ENCODE measurements at regions of chr16 and their contacts with region 1.

Region 1: DNA sequence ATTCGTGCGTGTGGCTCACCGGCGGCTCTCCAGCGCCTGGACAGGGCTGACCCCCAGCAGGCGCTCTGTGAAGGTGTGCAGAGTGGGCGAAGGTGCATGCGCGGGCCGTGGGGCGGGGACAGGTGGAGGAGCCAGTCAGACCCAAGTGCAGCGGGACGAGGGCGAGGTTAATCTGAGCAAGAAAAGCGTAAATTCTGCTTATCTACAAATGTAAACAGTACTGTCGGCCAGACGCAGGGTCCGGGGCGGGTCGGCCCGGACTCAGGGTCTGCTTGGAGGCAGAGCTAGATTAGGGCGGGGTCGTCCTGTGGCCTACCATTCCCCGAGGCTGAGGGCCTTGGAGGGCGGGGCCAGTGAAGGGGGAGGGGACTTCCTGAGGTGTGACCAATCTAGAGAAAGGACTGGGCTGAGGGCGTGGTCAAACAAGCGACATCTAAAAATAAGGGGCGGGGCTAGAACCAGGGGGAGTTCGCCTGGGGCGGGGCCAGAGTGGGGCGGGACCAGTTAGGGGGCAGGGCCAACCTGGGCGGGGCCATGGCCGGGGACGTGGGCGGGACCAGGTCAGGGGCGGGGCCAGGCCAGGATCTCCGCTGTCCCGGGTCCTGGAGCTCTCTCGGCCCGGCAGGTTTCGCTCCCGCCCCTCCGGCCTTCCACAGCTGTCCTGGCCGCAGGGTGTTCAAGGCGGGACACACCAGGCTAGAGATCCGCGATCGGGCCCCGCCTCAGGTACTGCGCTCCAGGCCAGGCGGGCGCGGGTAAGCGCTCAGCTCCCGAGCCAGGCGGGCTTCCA is at the start of gene SEC14L5:
- DNase-seq: peak; percentile 86 to 98
- H3K4me3 ChIP-seq: peak within 1 kb of the TSS; percentile 53 to 67
- H3K27ac ChIP-seq: peak within 1 kb of the TSS in 1 of 2 donors; percentile 49
- H3K4me1 ChIP-seq: peaks cover 0 to 11% of the 10 kb centered on the region in 2 donors
- H3K27me3 ChIP-seq: no peaks in the 10 kb centered on the region
- CTCF ChIP-seq: no peak
- total RNA-seq, gene SEC14L5: 5.7 TPM

Region 2: DNA sequence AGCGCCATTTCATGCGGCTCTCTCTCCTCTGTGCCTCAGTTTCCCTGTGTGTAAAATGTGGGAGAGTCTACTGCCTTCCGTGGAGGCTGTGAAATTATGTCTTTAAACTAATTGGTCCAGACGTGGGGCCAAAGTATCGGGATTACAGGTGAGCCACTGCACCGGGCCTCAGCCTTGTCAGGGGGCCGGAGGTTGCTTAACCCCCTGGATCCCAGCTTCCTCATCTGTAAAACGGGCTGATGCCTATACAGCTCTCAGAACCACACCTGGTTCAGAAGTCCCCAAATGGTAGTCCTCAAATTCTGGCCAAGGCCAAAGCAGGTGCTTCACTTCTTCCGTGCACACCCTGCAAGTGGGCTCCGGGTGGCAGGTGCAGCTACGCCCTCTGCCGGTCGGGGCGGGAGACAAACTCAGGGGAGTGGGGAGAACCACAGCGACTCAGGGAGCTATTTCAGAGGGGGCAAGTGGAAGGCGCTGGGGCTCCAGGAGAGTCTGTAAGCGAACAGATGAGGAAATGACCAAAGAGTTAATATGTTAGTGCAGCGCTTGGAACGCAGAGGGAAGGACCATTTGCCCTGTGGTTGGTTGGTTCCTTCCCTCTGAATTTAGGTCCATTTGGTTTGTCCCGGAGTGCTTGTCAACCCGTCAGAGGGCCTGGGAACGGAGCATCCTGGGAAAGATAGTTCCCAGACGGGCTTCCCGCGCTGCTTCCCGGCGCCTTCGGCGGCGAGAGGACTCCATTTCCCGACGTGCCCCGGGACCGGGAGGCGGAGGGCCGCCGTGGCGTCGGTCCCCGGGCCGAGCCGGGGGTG is 333.7 kb before region 1 on chr16 and contains the start of gene MGRN1:
- intact Hi-C with region 1: loop called (anchors 5 kb)
- DNase-seq: peak; percentile 81 to 96
- H3K4me3 ChIP-seq: peak within 1 kb of the TSS; percentile 79 to 98
- H3K27ac ChIP-seq: peak within 1 kb of the TSS; percentile 91 to 92
- H3K4me1 ChIP-seq: peaks cover 7 to 23% of the 10 kb centered on the region in 2 donors
- H3K27me3 ChIP-seq: no peaks in the 10 kb centered on the region
- CTCF ChIP-seq: peak; percentile 88 to 99 (median 92)
- total RNA-seq, gene MGRN1: 201 TPM

Region 3: DNA sequence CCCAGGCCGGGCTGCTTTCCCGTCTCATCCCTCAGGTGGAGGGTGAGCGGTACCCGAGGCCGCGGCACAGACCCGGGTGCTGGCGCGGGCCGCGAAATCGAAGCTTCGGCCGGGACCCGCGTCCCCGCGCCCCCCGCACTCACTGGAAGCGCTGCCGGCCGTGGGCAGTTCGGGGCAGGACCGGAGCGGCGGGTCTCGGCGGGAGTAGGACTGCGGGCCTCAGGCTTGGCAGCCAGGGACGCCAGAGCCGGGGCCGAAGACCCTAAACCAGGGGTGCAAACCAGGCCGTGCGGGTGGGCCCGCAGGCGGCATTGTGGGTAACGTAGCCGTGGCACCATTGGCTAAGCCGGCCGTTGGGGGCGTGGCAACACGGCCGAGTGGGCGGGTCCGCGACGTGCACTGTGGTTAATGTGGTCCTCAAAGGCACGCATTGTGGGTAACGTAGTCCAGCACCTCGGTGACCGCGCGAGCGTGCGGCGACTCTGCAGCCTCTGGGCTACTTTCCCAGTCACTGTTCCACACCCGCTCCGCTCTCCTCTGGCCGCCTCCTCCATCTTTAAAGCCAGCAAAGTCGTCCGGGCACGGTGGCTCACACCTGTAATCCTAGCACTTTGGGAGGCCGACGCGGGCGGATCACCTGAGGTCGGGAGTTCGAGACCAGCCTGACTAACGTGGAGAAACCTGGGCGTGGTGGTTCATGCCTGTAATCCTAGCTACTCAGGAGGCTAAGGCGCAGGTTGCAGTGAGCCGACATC is 190.9 kb before region 1 on chr16 and contains the start of gene ZNF500:
- intact Hi-C with region 1: loop called (anchors 1 kb)
- DNase-seq: peak; percentile 94 to 99
- H3K4me3 ChIP-seq: peak within 1 kb of the TSS; percentile 78 to 99
- H3K27ac ChIP-seq: peak within 1 kb of the TSS; percentile 77 to 83
- H3K4me1 ChIP-seq: peaks cover 8 to 23% of the 10 kb centered on the region in 2 donors
- H3K27me3 ChIP-seq: no peaks in the 10 kb centered on the region
- CTCF ChIP-seq: no peak
- total RNA-seq, gene ZNF500: 13.7 TPM

Region 4: DNA sequence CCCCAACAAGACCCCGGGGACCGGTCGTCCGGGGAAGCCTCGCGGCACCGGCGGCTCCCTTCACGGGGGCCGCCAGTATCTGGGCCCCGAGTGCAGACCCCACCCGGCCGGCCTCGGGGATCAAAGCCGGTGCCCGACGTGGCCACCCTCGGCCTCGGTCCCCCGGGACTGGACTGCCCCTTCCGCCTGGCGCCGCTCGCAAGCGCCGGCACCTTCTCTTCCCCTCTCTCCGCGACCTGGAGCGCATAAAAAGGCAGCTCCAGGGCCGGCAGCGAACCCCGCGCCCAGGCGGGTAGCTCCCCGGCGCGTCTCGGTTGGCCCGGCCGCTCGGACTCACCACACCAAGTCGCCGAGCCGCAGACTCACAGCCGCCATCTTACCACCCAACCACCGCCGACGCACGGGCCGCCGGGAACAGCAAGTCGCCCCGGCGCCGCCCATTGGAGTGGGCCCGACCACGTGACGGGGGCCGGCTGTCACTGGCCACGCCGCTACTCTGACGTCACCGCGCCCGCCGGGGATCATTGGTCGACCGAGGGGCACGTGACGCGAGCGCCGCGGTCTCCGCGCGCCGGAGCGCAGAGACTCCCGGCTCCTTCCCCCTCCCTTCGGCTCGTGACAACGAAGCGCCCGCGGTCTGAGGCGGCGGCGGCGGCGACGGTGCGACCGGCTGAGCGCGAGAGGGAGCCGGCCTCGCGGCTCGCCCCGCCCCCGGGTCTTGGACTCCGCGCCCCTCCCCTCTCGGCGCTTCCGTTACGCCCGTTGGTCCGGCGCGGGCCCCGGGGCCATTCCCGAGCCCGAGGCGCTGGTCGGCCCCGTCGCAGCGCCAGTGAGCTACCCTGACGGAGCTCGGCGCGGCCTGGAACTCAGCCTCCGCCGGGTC is 110.8 kb before region 1 on chr16 and contains the starts of genes GLYR1 and UBN1:
- intact Hi-C with region 1: loop called (anchors 1 kb)
- DNase-seq: peak; percentile 97 to 100
- H3K4me3 ChIP-seq: peak within 1 kb of the TSS; percentile 74 to 98
- H3K27ac ChIP-seq: peak within 1 kb of the TSS; percentile 92 to 97
- H3K4me1 ChIP-seq: peaks cover 12 to 23% of the 10 kb centered on the region in 2 donors
- H3K27me3 ChIP-seq: no peaks in the 10 kb centered on the region
- CTCF ChIP-seq: no peak
- total RNA-seq, gene GLYR1: 39.2 TPM
- total RNA-seq, gene UBN1: 31.8 TPM

Region 5: DNA sequence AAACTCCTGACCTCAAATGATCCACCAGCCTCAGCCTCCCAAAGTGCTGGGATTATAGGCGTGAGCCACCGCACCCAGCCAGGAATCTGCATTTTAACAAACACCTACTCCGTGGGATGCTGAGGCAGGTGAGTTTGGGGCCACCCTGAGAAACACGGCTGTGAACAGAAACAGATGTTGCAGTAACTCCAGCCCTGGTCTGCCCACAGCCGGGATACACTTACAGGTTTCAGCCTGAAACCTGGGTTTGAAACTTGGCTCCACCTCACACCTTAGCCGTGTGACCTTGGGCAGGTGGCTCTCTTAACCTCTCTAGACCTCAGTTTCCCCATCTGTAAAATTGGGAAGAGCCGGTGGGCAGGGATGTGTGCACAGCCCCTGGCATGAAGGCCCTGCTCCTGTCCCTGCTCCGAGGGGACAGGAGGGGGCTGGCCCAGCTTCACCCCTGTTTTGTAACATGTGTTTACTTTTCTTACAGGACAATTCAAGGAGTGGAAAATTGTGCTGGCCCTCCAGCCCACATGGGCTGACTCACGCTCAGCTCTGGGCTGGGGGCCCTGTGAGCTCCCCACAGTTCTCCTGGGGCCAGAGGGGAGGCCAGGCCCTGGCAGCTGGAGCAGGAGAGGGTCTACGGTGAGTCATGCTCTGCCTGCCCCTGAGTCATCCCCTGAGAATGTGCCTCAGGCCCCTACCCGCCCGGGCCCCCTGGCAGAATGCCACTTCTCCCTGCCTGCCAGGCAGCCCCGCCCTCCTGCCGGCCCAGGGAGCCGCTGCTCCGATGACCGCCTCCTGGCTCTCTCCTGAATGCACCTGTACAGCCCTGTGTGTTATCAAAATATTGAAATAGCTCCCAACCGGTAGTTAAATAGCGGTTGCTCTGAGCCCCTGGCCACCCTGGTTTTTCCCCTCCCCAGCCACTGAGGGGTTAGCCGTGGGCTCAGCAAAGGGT is 13.3 kb before region 1 on chr16:
- intact Hi-C with region 1: loop called (anchors 1 kb)
- DNase-seq: peak; percentile 90 to 97
- H3K4me3 ChIP-seq: peak overlapping the region in 1 of 2 donors; percentile 32
- H3K27ac ChIP-seq: peak overlapping the region; percentile 79 to 86
- H3K4me1 ChIP-seq: peaks cover 20 to 33% of the 10 kb centered on the region in 2 donors
- H3K27me3 ChIP-seq: no peaks in the 10 kb centered on the region
- CTCF ChIP-seq: no peak

Region 6: DNA sequence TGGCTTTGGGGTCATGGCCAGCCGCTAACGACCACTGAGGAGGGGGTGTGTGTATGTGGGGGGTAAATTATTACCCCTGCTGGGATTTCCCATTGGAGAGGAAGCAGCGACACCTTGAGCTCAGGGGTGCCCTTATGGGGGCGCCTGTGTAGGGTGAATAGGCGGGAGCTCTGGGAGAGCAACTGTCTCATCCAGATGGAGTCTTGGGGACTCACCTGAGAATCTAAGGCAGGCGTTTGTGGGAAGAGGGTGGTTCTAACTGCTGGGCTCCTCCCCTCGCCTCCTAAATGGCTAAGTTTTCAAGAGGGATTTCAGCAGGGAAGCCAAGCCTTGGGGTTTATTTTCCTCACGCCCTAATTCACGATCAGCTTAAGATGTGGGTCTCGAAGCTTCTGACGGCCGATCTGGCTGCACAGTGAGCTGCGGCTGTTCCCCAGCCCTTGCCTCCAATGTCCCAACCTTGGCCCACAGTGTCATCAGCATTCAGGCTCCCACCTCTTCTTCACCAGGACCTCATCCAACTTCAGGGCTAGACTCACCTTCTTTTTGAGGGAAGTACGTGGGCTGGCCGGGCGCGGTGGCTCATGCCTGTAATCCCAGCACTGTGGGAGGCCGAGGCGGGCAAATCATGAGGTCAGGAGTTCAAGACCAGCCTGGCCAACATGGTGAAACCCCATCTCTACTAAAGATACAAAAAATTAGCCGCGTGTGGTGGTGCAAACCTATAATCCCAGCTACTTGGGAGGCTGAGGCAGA is 276.6 kb after region 1 on chr16:
- intact Hi-C with region 1: no loop called
- DNase-seq: no peak
- H3K4me3 ChIP-seq: no peak overlapping the region
- H3K27ac ChIP-seq: no peak overlapping the region
- H3K4me1 ChIP-seq: no peaks in the 10 kb centered on the region
- H3K27me3 ChIP-seq: no peaks in the 10 kb centered on the region
- CTCF ChIP-seq: no peak

Measured in ascending aorta (tissue), 2 donors.